HCT116 (cell line): ENCODE measurements at regions of chr4 and their contacts with region 1.

Region 1: GRCh38 chr4:155787113-155787710 is 28.4 kb downstream of the GUCY1B1 start:
- DNase-seq: peak; percentile 44
- ATAC-seq: peak; percentile 98
- H3K4me3 ChIP-seq: no peak overlapping the region
- H3K27ac ChIP-seq: no peak overlapping the region
- H3K4me1 ChIP-seq: no peaks in the 10 kb centered on the region
- H3K27me3 ChIP-seq: no peaks in the 10 kb centered on the region
- CTCF ChIP-seq: peak; percentile 72 to 81 (median 74)
- POLR2A ChIP-seq: no peak
- RAD21 ChIP-seq: peak; percentile 86

Region 2: GRCh38 chr4:155442267-155443105 is 344.7 kb before region 1 on chr4:
- CTCF ChIA-PET with region 1: interaction called, 14 read pairs
- POLR2A ChIA-PET with region 1: no interaction called
- RAD21 ChIA-PET with region 1: no interaction called
- intact Hi-C with region 1: loop called (anchors 2 kb)
- DNase-seq: peak; percentile 49
- ATAC-seq: peak; percentile 91
- H3K4me3 ChIP-seq: peak overlapping the region; percentile 22 to 37
- H3K27ac ChIP-seq: no peak overlapping the region
- H3K4me1 ChIP-seq: no peaks in the 10 kb centered on the region
- H3K27me3 ChIP-seq: no peaks in the 10 kb centered on the region
- CTCF ChIP-seq: peak; percentile 57 to 98 (median 97); a peak in 5 of 6 replicates
- POLR2A ChIP-seq: no peak
- RAD21 ChIP-seq: peak; percentile 80

Region 3: DNA sequence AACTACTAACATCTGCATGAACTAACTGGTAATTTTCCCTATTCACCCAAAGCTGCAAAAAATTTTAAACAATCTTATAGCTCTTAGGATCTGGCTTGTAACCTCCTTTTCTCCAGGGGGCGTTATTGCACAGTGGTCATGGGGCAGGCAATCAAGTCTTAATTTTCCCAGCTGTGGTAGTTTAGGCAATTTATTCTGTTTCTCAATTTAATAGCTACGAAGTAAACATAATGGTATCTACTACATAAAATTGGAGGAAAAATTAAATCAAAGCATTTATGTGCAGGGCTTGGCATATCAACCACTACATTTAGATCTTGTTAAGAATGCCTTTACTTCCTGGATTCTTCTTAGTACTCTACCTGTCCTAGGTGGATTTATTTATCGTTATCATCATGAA is 257.9 kb before region 1 on chr4:
- CTCF ChIA-PET with region 1: interaction called, 11 read pairs
- POLR2A ChIA-PET with region 1: no interaction called
- RAD21 ChIA-PET with region 1: no interaction called
- intact Hi-C with region 1: no loop called
- DNase-seq: no peak
- ATAC-seq: no peak; the same call in 1 of the 2 replicates
- H3K4me3 ChIP-seq: no peak overlapping the region
- H3K27ac ChIP-seq: no peak overlapping the region
- H3K4me1 ChIP-seq: no peaks in the 10 kb centered on the region
- H3K27me3 ChIP-seq: no peaks in the 10 kb centered on the region
- CTCF ChIP-seq: peak; percentile 12 to 39 (median 19); a peak in 2 of 6 replicates
- POLR2A ChIP-seq: no peak
- RAD21 ChIP-seq: peak; percentile 44